BJ (cell line): ENCODE measurements at regions of chr3 and their contacts with region 1.

Region 1: GRCh38 chr3:49295489-49296058 is 18.5 kb upstream of the C3orf62 start:
- DNase-seq: no peak
- H3K4me3 ChIP-seq: no peak overlapping the region
- H3K27me3 ChIP-seq: no peaks in the 10 kb centered on the region
- CTCF ChIP-seq: peak; percentile 61

Region 2: DNA sequence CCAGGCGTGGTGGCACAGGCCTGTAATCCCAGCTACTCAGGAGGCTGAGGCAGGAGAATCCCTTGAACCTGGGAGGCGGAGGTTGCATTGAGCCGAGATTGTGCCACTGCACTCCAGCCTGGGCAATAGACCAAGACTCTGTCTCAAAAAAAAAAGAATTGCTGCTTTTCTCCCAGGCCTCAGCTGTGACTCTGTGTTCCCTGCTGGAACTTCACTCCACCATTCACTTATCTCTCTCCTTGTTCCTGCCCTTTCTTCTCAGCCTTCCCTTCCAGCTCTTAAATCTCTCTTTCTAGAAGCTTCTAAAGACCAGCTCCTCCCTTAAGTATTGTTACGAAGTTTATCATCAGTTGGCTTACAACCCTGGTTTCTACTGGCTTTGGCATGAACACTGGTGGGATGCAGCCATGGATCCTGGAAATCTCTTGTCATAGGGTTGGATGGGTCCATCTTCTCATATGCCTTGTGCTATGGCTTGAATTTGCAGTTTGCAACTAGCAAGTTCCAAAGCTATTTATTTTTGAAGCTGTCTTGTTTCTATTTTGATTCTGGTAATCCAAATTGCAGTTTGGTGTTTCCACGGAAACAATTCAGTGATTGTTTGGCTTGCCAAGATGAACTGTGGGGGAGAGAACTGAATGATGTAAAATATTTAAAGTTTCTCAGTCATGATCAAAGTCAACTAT is 29.0 kb before region 1 on chr3:
- CTCF ChIA-PET with region 1: no interaction called
- POLR2A ChIA-PET with region 1: no interaction called
- DNase-seq: no peak
- H3K4me3 ChIP-seq: no peak overlapping the region
- H3K27me3 ChIP-seq: no peaks in the 10 kb centered on the region
- CTCF ChIP-seq: no peak

Region 3: DNA sequence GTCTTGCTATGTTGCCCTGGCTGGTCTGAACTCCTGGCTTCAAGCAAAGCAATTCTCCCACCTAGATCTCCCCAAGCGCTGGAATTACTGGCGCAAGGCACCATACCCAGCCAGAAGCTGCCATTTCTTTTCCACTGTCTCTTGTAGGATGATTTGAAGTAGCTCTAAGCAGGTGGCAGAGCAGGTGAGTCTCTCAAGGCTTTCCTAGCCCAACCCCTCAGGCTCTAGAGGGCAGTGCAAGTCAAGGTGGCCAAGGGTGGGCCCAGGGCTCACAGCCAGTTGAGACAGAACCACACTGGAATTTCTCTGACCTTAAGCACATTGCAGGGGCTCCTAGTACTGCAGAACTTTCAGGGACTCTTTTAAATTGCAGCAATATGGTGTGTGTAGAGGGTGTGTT is 158.9 kb after region 1 on chr3:
- CTCF ChIA-PET with region 1: interaction called, 11 read pairs
- POLR2A ChIA-PET with region 1: no interaction called
- DNase-seq: no peak
- H3K4me3 ChIP-seq: no peak overlapping the region
- H3K27me3 ChIP-seq: no peaks in the 10 kb centered on the region
- CTCF ChIP-seq: peak; percentile 19; the same call in 1 of the 2 replicates